CD14-positive monocyte (primary cell): ENCODE measurements at regions of chr2 and their contacts with region 1.

Region 1: GRCh38 chr2:168961450-168962229 is 60.5 kb downstream of the G6PC2 start:
- DNase-seq: peak; percentile 69 to 85 (median 79)
- H3K4me3 ChIP-seq: no peak overlapping the region
- H3K4me3 Mint-ChIP-seq: no peak overlapping the region
- H3K27ac ChIP-seq: no peak overlapping the region
- H3K27ac Mint-ChIP-seq: no peak overlapping the region
- H3K4me1 ChIP-seq: no peaks in the 10 kb centered on the region
- H3K4me1 Mint-ChIP-seq: peaks cover 13% of the 10 kb centered on the region
- H3K27me3 ChIP-seq: no peaks in the 10 kb centered on the region
- H3K27me3 Mint-ChIP-seq: no peaks in the 10 kb centered on the region
- CTCF ChIP-seq: peak; percentile 85

Region 2: GRCh38 chr2:169141713-169142352 is 180.2 kb after region 1 on chr2:
- intact Hi-C with region 1: loop called (anchors 2 to 5 kb)
- DNase-seq: peak; percentile 39 to 74 (median 64)
- H3K4me3 ChIP-seq: no peak overlapping the region
- H3K4me3 Mint-ChIP-seq: no peak overlapping the region
- H3K27ac ChIP-seq: no peak overlapping the region
- H3K27ac Mint-ChIP-seq: no peak overlapping the region
- H3K4me1 ChIP-seq: no peaks in the 10 kb centered on the region
- H3K4me1 Mint-ChIP-seq: peaks cover 5% of the 10 kb centered on the region
- H3K27me3 ChIP-seq: no peaks in the 10 kb centered on the region
- H3K27me3 Mint-ChIP-seq: peaks cover 0 to 1% (median 0%) of the 10 kb centered on the region in 3 donors
- CTCF ChIP-seq: peak; percentile 89